ENCODE measurements at regions of chr19 and their contacts with region 1.

Region 1: DNA sequence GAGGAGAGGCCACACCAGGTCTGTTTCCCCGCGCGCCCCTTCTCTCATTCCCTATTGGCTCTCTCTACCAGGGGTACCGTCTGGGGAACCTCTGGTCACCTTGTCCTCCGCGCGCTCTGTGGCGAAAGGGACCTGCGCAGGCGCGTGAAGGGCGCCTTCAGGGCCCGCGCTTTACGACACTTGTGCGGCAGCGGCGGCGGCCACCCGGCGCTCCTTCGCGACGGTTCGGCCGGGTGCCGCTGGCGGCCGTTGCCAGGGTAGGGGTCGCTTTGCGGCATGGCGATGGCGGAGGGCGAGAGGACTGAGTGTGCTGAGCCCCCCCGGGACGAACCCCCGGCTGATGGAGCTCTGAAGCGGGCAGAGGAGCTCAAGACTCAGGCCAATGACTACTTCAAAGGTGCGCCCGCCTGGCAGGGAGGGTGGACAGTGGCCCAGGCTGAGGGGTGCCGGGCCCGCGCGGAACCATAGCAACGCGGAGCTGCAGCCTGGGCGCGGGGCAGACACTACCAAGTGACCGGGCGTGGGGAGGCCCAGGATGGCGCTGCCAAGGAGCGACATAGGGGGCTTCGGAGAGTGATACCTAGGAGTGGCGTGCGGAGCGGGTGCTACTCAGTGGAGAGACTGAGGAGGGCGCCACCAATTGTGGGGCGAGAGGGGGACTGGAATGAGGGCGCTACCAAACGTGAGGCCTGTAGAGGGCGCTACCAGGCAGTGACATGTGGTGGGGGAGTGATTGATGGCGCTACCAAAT is at the start of gene PPP5C:
- DNase-seq: peak; percentile 97
- H3K4me3 Mint-ChIP-seq: peak within 1 kb of the TSS; percentile 93
- H3K27ac Mint-ChIP-seq: peak within 1 kb of the TSS; percentile 79
- H3K4me1 Mint-ChIP-seq: peaks cover 49% of the 10 kb centered on the region
- H3K27me3 Mint-ChIP-seq: peaks cover 27% of the 10 kb centered on the region
- CTCF ChIP-seq: peak; percentile 79
- total RNA-seq, gene PPP5C: 124 and 128 TPM in 2 replicates

Region 2: GRCh38 chr19:46288896-46289588 is 58.0 kb before region 1 on chr19:
- CTCF ChIA-PET with region 1: no interaction called
- intact Hi-C with region 1: loop called (anchors 10 kb)
- DNase-seq: no peak
- H3K4me3 Mint-ChIP-seq: no peak overlapping the region
- H3K27ac Mint-ChIP-seq: no peak overlapping the region
- H3K4me1 Mint-ChIP-seq: no peaks in the 10 kb centered on the region
- H3K27me3 Mint-ChIP-seq: peaks cover 11% of the 10 kb centered on the region
- CTCF ChIP-seq: no peak

Region 3: DNA sequence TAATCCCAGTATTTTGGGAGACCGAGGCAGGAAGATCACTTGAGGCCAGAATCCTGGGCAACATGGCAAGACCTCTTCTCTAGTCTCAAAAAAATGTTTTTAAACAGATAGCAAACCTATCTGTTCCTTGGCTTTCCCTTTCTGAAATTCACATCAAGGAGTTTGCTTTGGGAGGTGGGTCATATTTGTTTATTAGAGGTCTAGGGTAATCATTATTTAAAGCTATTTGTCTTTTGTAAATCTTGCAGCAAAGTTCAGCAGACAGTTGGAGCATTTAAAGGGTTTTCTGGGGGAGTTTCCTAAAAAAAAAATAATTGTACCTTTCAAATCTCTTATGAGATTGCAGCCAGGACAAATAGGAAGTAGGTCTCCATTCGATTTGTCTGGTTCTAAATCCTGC is 17.4 kb after region 1 on chr19:
- CTCF ChIA-PET with region 1: no interaction called
- intact Hi-C with region 1: no loop called
- DNase-seq: no peak
- H3K4me3 Mint-ChIP-seq: no peak overlapping the region
- H3K27ac Mint-ChIP-seq: no peak overlapping the region
- H3K4me1 Mint-ChIP-seq: peaks cover 39% of the 10 kb centered on the region
- H3K27me3 Mint-ChIP-seq: no peaks in the 10 kb centered on the region
- CTCF ChIP-seq: no peak

Measured in Calu3 (cell line).